ENCODE measurements at regions of chr17 and their contacts with region 1.

Region 1: GRCh38 chr17:42135664-42136653 is 13.4 kb downstream of the HSPB9 start:
- DNase-seq: peak; percentile 69
- ATAC-seq: peak; percentile 92
- H3K4me3 Mint-ChIP-seq: peak overlapping the region; percentile 15; the same call in 1 of the 2 replicates
- H3K27ac Mint-ChIP-seq: peak overlapping the region; percentile 97
- H3K4me1 Mint-ChIP-seq: peaks cover 42% of the 10 kb centered on the region
- H3K27me3 Mint-ChIP-seq: no peaks in the 10 kb centered on the region
- CTCF ChIP-seq: no peak

Region 2: GRCh38 chr17:42120770-42121769 is 14.9 kb before region 1 on chr17 and contains the start of gene KAT2A:
- CTCF ChIA-PET with region 1: interaction called, 16 read pairs
- POLR2A ChIA-PET with region 1: interaction called, 3 read pairs
- DNase-seq: peak; percentile 85
- ATAC-seq: peak; percentile 73
- H3K4me3 Mint-ChIP-seq: peak within 1 kb of the TSS; percentile 69
- H3K27ac Mint-ChIP-seq: 0 out of 2 replicates have a peak within 1 kb of the TSS, but pooled peaks have one; percentile 19
- H3K4me1 Mint-ChIP-seq: peaks cover 31% of the 10 kb centered on the region
- H3K27me3 Mint-ChIP-seq: no peaks in the 10 kb centered on the region
- CTCF ChIP-seq: no peak
- total RNA-seq, gene KAT2A: 44.8 to 54.0 TPM (median 52.7 TPM) in 3 replicates